Activated T-helper 1 cell treated with anti-CD3 and anti-CD28 coated beads, Interleukin-12 subunit alpha, Interleukin-12 subunit beta, Interleukin-2, Interleukin-4 antibody, amounts not matched to agents 30 ng/mL and 10 ng/mL and 1 ng/mL, durations not matched to agents 14 hours and 24 hours and 36 hours (primary cell): ENCODE measurements at regions of chr14 and their contacts with region 1.

Region 1: DNA sequence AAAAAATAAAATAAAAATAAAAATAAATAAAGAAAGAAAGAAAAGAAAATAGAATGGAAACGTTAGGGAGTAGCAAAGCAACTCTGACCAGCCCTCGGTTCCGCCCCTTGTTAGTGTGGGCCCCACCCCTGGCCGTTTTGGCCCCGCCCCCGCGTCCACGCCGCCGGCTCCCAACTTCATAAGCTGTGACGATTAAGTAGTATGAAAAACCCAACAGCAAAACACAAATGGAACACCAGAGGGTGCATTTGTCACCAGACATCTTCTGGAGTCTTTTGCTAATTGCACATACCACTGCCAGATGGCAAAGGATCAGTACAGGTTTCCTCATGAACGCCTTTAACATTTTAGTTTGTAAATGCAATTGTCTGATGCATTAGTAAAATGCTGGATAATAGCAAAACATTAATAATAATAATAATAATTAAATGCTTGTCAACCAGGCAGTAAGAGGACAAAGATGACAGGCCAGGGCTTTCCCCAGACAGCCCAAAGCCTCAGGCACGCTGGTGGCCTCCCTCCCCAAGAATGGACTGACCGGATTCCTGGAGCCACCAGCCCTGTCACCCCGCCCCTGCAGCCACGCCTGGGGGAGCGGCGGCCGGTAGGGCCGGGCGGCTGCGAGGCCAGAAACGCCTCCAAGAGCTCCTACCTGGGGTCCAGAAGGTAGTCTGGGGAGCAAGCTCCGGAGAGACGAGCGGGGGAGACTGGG is 23.6 kb downstream of the HSP90AA1 start:
- DNase-seq: peak; percentile 48
- H3K4me3 Mint-ChIP-seq: no peak overlapping the region
- H3K27ac Mint-ChIP-seq: no peak overlapping the region
- H3K4me1 Mint-ChIP-seq: no peaks in the 10 kb centered on the region
- H3K27me3 Mint-ChIP-seq: peaks cover 3% of the 10 kb centered on the region

Region 2: DNA sequence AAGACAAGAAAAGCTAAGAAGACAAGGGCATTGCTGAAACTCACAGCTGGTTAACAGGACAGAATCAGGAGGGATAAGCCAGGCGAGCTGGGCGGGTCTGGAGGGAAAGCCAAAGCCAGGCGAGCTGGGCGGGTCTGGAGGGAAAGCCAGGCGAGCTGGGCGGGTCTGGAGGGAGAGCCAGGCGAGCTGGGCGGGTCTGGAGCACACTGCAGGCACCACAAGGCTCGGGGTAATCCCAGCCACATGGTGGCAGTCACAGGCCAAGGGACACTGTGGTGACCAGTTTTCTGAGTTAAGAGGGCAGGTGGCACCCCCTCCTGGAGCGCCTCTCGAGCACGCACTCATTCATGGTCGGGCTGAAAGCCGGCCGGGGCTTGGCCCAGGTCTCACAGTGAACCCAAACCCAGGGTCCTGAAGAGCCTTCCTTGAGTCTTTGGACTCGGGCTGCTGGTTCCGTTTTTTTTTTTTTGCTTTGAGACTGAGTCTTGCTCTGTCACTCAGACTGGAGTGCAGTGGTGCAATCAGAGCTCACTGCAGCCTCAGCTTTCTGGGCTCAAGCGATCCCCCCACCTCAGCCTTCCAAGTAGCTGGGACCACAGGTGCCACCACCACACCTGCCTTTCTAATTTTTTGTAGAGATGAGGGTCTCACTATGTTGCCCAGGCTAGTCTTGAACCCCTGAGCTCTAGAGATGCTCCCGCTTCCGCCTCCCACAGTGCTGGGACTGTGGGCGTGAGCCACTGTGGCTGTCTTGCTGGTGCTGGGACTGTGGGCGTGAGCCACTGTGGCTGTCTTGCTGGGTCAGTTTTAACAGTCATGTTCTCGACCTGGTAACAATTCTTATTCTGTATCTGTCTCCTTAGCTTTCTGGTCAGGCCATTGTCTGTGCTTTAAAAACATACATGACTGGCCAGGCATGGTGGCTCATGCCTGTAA is 16.6 kb before region 1 on chr14:
- intact Hi-C with region 1: no loop called
- DNase-seq: no peak
- H3K4me3 Mint-ChIP-seq: no peak overlapping the region
- H3K27ac Mint-ChIP-seq: peak overlapping the region; percentile 44
- H3K4me1 Mint-ChIP-seq: no peaks in the 10 kb centered on the region
- H3K27me3 Mint-ChIP-seq: no peaks in the 10 kb centered on the region

Region 3: DNA sequence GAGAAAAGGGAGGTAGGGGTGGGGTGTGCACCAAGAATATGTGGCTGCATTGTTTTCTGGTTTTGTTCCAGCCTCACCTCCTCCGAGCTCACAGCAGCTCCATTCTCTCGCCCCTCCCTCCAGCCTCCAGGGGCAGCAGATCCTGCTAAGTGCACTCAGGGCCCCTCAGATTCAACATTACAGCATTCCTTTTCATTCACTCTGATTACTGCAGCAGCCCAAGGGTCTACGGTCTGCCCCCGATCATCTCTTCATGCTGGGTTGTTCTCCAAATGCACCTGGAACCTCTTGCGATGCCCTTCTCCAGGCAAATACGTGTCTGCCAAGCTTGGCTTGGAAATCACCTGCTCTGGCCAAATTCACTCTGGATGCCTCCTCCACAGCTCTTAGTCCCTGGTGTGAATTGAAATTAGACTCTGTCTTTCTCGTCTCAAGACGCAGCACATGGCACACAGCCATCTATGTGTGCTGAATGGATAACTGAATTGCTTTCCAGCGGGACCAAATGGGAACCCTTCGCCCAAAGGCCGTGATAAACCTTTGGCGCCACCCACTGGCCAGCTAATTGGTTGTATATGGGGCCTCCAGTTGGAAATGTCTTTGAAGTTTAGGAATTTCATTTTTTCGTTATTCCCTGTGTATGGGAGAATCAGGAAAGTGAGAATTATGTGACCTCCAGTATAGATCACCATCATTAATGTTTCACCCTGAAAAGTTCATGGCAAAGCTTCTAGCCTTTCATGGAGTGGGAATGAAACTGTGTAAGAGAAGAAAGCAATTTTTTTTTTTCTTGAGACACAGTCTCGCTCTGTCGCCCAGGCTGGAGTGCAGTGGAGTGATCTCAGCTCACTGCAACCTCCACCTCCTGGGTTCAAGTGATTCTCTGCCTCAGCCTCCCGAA is 33.2 kb after region 1 on chr14:
- intact Hi-C with region 1: loop called (anchors 1 kb)
- DNase-seq: peak; percentile 31
- H3K4me3 Mint-ChIP-seq: no peak overlapping the region
- H3K27ac Mint-ChIP-seq: no peak overlapping the region
- H3K4me1 Mint-ChIP-seq: peaks cover 24% of the 10 kb centered on the region
- H3K27me3 Mint-ChIP-seq: no peaks in the 10 kb centered on the region